ENCODE measurements at regions of chr7 and their contacts with region 1.

Region 1: DNA sequence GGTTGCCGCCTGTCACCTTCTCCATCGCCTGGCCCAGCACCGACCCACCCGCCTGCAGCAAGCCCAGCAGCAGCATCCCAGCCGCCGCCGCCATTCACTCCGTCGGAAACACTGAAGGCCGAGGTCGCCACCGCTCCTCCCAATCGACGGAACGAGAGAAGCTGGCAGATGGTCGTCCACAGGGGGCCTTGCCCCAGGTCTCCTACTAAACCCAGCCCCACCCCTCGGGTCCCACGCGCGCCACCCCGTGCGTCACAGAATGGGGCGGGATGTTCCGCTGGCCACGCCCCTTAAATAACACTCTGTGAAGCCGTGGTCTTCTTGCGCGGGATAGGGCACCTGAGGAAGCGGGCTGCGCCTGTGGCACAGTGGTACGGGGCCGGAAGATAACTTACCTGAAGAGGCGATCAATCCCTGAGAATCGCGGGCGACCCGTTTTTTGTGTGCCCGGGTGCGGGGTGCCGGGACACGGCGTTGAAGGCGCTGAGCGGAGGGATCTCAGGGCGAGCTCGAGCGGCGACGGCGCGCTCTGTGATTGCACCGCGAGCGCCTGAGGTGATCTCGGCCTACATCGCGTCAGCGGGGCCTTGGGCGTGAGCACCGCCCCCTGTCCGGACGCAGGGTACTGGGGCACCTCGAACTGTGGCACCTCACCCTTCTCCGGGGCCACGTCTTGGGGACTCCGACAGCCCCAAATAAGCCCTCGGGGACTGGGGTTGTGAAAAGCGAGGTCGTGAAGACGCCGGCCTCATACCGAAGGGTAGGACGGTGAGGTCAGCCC is at the start of gene CYP51A1:
- DNase-seq: peak; percentile 93 to 98 (median 96)
- ATAC-seq: peak; percentile 93
- H3K4me3 ChIP-seq: peak within 1 kb of the TSS; percentile 92
- H3K4me3 Mint-ChIP-seq: peak within 1 kb of the TSS; percentile 95 to 100 (median 98)
- H3K27ac ChIP-seq: peak within 1 kb of the TSS; percentile 94
- H3K27ac Mint-ChIP-seq: peak within 1 kb of the TSS; percentile 89 to 100 (median 99)
- H3K4me1 ChIP-seq: peaks cover 4 to 12% of the 10 kb centered on the region in 2 donors
- H3K4me1 Mint-ChIP-seq: peaks cover 12 to 49% (median 40%) of the 10 kb centered on the region in 7 donors
- H3K27me3 ChIP-seq: no peaks in the 10 kb centered on the region
- H3K27me3 Mint-ChIP-seq: peaks cover 0 to 2% (median 0%) of the 10 kb centered on the region in 5 donors
- total RNA-seq, gene CYP51A1: 14.7 to 36.6 (median 21.7) TPM

Region 2: GRCh38 chr7:90346336-90347125 is 1787.9 kb before region 1 on chr7 and contains the start of gene GTPBP10:
- CTCF ChIA-PET with region 1: no interaction called
- POLR2A ChIA-PET with region 1: no interaction called
- intact Hi-C with region 1: loop called in 1 of 2 experiments (anchors 1 kb)
- DNase-seq: peak; percentile 88 to 96 (median 94)
- ATAC-seq: peak; percentile 99
- H3K4me3 ChIP-seq: peak within 1 kb of the TSS; percentile 83
- H3K4me3 Mint-ChIP-seq: peak within 1 kb of the TSS; percentile 93 to 99 (median 98)
- H3K27ac ChIP-seq: peak within 1 kb of the TSS; percentile 95
- H3K27ac Mint-ChIP-seq: peak within 1 kb of the TSS; percentile 96 to 100 (median 99)
- H3K4me1 ChIP-seq: peaks cover 13 to 26% of the 10 kb centered on the region in 2 donors
- H3K4me1 Mint-ChIP-seq: peaks cover 23 to 65% (median 53%) of the 10 kb centered on the region in 7 donors
- H3K27me3 ChIP-seq: no peaks in the 10 kb centered on the region
- H3K27me3 Mint-ChIP-seq: peaks cover 0 to 2% (median 0%) of the 10 kb centered on the region in 5 donors
- total RNA-seq, gene GTPBP10: 21.5 to 51.4 (median 29.8) TPM

Region 3: DNA sequence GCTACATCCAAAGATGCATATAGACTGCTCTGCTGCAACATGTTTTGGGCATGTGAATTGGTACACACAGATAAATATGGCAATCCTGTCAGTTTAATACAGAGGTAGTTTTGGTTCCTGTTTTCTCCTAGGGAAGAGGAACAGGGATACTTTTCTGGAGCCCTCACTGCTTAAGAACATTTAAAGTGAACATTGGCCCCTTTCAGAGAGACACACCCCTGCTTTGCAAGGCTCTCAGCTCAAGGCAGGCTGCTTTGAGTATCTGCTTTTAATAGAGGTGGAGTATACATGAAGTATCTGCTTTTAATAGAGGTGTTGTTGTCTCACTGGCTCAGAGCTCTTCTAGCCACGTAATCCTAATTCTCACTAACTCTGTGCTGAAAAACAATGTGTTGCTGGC is 39.1 kb before region 1 on chr7:
- CTCF ChIA-PET with region 1: no interaction called
- POLR2A ChIA-PET with region 1: no interaction called
- intact Hi-C with region 1: no loop called
- DNase-seq: no peak
- ATAC-seq: no peak
- H3K4me3 ChIP-seq: no peak overlapping the region
- H3K4me3 Mint-ChIP-seq: no peak overlapping the region
- H3K27ac ChIP-seq: no peak overlapping the region
- H3K27ac Mint-ChIP-seq: peak overlapping the region in 2 of 9 donors; percentile 32 to 53
- H3K4me1 ChIP-seq: no peaks in the 10 kb centered on the region
- H3K4me1 Mint-ChIP-seq: peaks cover 0 to 2% (median 0%) of the 10 kb centered on the region in 7 donors
- H3K27me3 ChIP-seq: no peaks in the 10 kb centered on the region
- H3K27me3 Mint-ChIP-seq: no peaks in the 10 kb centered on the region

Region 4: GRCh38 chr7:92158660-92159575 is 24.5 kb after region 1 on chr7:
- CTCF ChIA-PET with region 1: no interaction called
- POLR2A ChIA-PET with region 1: no interaction called
- intact Hi-C with region 1: no loop called
- DNase-seq: no peak
- ATAC-seq: no peak
- H3K4me3 ChIP-seq: no peak overlapping the region
- H3K4me3 Mint-ChIP-seq: no peak overlapping the region
- H3K27ac ChIP-seq: no peak overlapping the region
- H3K27ac Mint-ChIP-seq: no peak overlapping the region
- H3K4me1 ChIP-seq: no peaks in the 10 kb centered on the region
- H3K4me1 Mint-ChIP-seq: peaks cover 0 to 5% (median 0%) of the 10 kb centered on the region in 7 donors
- H3K27me3 ChIP-seq: no peaks in the 10 kb centered on the region
- H3K27me3 Mint-ChIP-seq: peaks cover 5 to 32% (median 14%) of the 10 kb centered on the region in 5 donors

Region 5: GRCh38 chr7:92178927-92179924 is 44.8 kb after region 1 on chr7 and contains the start of gene LRRD1:
- CTCF ChIA-PET with region 1: no interaction called
- POLR2A ChIA-PET with region 1: no interaction called
- intact Hi-C with region 1: loop called (anchors 1 kb)
- DNase-seq: peak; percentile 77 to 96 (median 89)
- ATAC-seq: peak; percentile 100
- H3K4me3 ChIP-seq: peak within 1 kb of the TSS; percentile 73
- H3K4me3 Mint-ChIP-seq: peak within 1 kb of the TSS; percentile 74 to 84 (median 80)
- H3K27ac ChIP-seq: peak within 1 kb of the TSS; percentile 37
- H3K27ac Mint-ChIP-seq: peak within 1 kb of the TSS in 5 of 9 donors; percentile 25 to 63 (median 41)
- H3K4me1 ChIP-seq: peaks cover 0 to 6% of the 10 kb centered on the region in 2 donors
- H3K4me1 Mint-ChIP-seq: peaks cover 0 to 17% (median 9%) of the 10 kb centered on the region in 7 donors
- H3K27me3 ChIP-seq: no peaks in the 10 kb centered on the region
- H3K27me3 Mint-ChIP-seq: peaks cover 0 to 33% (median 4%) of the 10 kb centered on the region in 5 donors
- total RNA-seq, gene LRRD1: 0.17 to 0.22 TPM in 2 of 5 experiments, not detected in the others

Region 6: DNA sequence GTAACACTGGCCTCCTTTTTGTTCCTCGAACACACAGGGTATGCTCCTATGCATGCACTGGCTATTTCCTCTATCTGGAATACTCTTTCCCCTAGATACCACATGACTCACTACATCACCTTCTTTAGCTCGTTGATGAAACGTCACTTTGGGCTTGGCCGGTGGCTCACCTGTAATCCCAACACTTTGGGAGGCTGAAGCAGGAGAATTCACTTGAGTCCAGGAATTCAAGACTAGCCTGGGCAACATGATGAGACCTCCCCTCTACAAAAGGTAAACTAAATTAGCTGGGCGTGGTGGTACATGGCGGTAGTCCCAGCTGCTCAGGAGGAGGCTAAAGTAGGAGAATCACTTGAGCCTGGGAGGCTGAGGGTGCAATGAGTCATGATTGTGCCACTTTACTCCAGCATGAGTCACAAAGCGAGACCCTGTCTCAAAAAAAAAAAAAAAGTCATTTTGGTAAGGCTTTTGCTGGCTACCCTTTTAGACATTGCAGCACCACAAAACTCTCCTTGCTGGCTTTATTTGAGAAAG is 125.9 kb after region 1 on chr7:
- CTCF ChIA-PET with region 1: no interaction called
- POLR2A ChIA-PET with region 1: no interaction called
- intact Hi-C with region 1: no loop called
- DNase-seq: no peak
- ATAC-seq: no peak
- H3K4me3 ChIP-seq: no peak overlapping the region
- H3K4me3 Mint-ChIP-seq: no peak overlapping the region
- H3K27ac ChIP-seq: no peak overlapping the region
- H3K27ac Mint-ChIP-seq: peak overlapping the region in 1 of 9 donors; percentile 20
- H3K4me1 ChIP-seq: no peaks in the 10 kb centered on the region
- H3K4me1 Mint-ChIP-seq: peaks cover 6 to 32% (median 21%) of the 10 kb centered on the region in 7 donors
- H3K27me3 ChIP-seq: no peaks in the 10 kb centered on the region
- H3K27me3 Mint-ChIP-seq: no peaks in the 10 kb centered on the region

Region 7: DNA sequence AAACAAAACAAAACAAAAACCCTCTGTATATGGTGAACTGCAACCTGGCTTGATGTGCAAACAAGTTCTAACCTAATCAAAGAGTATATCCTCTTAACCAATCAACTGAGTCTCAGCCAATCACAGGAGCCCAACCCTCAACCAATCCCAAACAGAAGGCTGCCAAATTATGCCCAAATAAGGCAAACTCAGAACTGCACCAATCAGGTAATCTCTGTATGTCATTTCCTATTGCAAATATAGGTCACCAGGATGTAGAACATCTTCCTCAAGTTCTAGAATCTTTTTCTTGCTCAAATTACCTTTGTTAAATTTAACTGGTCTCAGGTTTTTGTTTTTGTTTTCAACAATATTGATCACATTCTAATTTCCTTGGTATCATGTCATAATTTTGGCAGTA is 450.5 kb after region 1 on chr7:
- CTCF ChIA-PET with region 1: no interaction called
- POLR2A ChIA-PET with region 1: interaction called, 4 read pairs
- intact Hi-C with region 1: loop called (anchors 1 to 2 kb)
- DNase-seq: peak in 5 of 9 donors; percentile 11 to 42 (median 23)
- ATAC-seq: peak; percentile 16
- H3K4me3 ChIP-seq: no peak overlapping the region
- H3K4me3 Mint-ChIP-seq: peak overlapping the region in 6 of 10 donors; percentile 7 to 61 (median 51)
- H3K27ac ChIP-seq: no peak overlapping the region
- H3K27ac Mint-ChIP-seq: peak overlapping the region in 5 of 9 donors; percentile 0 to 84 (median 70)
- H3K4me1 ChIP-seq: peaks cover 23 to 31% of the 10 kb centered on the region in 2 donors
- H3K4me1 Mint-ChIP-seq: peaks cover 40 to 89% (median 70%) of the 10 kb centered on the region in 7 donors
- H3K27me3 ChIP-seq: no peaks in the 10 kb centered on the region
- H3K27me3 Mint-ChIP-seq: no peaks in the 10 kb centered on the region

Region 8: DNA sequence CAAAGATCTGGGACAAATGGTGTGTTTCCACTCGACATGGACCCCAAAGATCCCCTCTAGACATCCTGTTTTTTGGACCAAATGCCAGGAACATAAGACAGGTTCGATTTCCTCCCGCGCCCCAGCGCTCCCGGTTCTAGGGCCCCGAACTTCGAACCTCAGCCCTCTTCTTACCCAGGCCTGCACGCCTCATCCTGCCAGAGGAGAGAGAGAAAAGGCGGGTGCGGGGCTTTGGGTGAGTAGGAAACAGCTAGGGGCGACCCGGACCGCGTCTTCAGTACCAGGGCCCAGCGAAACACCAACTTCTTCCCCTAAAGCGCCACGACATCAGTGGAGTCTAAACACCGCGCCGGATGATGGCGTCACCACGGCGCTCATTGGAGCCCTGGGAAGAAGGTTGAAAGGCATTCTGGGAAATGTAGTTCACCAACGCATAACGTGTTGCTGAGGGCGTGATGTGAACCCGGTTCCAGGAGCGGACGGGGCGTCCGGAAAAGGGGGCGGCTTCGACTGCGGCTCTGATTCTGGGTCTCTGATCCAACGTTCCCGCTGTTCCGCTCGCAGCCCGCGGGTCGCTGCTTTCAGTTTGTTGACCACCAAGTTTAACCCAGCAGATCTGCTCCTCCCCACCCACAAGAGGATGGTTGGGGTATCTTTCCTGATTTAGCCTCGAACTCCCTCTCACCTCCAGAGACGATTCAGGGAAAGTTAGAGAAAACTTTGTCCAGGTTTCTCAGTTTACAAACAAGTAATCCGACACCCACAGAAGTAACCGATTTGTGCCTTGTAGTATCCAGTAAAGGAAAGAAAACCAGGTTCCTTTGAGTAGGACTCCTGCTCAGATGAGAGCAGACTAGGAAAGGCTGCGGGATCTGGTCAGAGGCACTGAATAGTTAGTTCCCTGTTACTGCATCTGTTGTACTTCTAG is 1869.8 kb after region 1 on chr7 and contains the start of gene BET1:
- CTCF ChIA-PET with region 1: no interaction called
- POLR2A ChIA-PET with region 1: no interaction called
- intact Hi-C with region 1: loop called in 1 of 2 experiments (anchors 10 kb)
- DNase-seq: peak; percentile 87 to 96 (median 92)
- ATAC-seq: peak; percentile 98
- H3K4me3 ChIP-seq: peak within 1 kb of the TSS; percentile 75
- H3K4me3 Mint-ChIP-seq: peak within 1 kb of the TSS; percentile 88 to 100 (median 99)
- H3K27ac ChIP-seq: peak within 1 kb of the TSS; percentile 91
- H3K27ac Mint-ChIP-seq: peak within 1 kb of the TSS; percentile 95 to 100 (median 99)
- H3K4me1 ChIP-seq: peaks cover 3 to 17% of the 10 kb centered on the region in 2 donors
- H3K4me1 Mint-ChIP-seq: peaks cover 22 to 56% (median 51%) of the 10 kb centered on the region in 7 donors
- H3K27me3 ChIP-seq: no peaks in the 10 kb centered on the region
- H3K27me3 Mint-ChIP-seq: peaks cover 0 to 28% (median 11%) of the 10 kb centered on the region in 5 donors
- total RNA-seq, gene BET1: 9.9 to 37.6 (median 25.2) TPM

Measured in naive thymus-derived CD4-positive, alpha-beta T cell (primary cell).